HepG2 (cell line): ENCODE measurements at regions of chr3 and their contacts with region 1.

Region 1: DNA sequence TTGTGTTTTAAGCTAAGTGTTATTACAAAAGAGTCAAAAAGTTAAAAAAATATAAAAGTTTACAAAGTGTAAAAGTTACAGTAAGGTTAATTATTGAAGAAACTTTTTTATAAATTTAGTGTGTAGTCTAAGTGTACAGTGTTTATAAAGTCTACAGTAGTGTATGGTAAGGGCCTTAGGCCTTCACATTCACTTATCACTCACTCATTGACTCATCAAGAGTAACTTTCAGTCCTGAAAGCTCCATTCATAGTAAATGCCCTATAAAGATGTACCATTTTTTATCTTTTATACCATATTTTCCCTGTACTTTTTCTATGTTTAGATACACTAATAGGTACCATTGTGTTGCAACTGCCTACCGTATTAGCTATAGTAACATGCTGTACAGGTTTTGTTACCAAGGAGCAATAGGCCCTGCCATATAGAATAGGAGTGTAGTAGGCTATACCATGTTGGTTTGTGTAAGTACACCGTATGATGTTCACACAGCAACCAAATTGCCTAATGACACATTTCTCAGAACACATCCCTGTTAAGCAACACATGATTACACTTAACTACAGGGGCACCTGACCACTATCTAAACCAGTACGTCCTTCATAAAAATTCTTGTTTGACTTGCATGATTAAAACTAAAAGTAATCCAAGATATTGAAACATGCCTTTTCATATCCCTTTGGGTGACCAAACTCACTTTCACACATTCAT is 17.2 kb downstream of the RAD18 start:
- DNase-seq: no peak
- ATAC-seq: no peak
- H3K4me3 ChIP-seq: no peak overlapping the region
- H3K27ac ChIP-seq: no peak overlapping the region
- H3K4me1 ChIP-seq: peaks cover 9% of the 10 kb centered on the region
- H3K27me3 ChIP-seq: no peaks in the 10 kb centered on the region
- CTCF ChIP-seq: no peak
- EP300 ChIP-seq: no peak
- POLR2A ChIP-seq: no peak
- RAD21 ChIP-seq: no peak

Region 2: DNA sequence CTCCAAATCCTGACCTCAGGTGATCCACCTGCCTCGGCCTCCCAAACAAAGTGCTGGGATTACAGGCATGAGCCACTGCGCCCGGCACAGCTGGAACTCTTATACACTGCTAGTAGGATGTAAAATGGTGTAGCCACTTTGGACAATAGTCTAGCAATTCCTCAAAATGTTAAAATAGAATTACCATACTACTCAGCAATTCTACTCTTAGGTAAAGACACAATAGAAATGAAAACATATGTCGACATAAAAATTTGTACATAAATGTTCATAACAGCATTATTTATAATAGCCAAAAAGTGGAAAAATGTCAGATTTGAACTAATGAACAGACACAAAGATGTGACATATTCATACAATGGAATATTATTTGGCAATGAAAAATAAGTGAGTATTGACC is 16.2 kb before region 1 on chr3:
- CTCF ChIA-PET with region 1: no interaction called
- POLR2A ChIA-PET with region 1: no interaction called
- in situ Hi-C with region 1: no loop called
- intact Hi-C with region 1: loop called (anchors 1 kb)
- DNase-seq: no peak
- ATAC-seq: no peak
- H3K4me3 ChIP-seq: no peak overlapping the region
- H3K27ac ChIP-seq: no peak overlapping the region
- H3K4me1 ChIP-seq: no peaks in the 10 kb centered on the region
- H3K27me3 ChIP-seq: no peaks in the 10 kb centered on the region
- CTCF ChIP-seq: no peak
- EP300 ChIP-seq: no peak
- POLR2A ChIP-seq: no peak
- RAD21 ChIP-seq: no peak